ENCODE measurements at regions of chr20 and their contacts with region 1.

Region 1: DNA sequence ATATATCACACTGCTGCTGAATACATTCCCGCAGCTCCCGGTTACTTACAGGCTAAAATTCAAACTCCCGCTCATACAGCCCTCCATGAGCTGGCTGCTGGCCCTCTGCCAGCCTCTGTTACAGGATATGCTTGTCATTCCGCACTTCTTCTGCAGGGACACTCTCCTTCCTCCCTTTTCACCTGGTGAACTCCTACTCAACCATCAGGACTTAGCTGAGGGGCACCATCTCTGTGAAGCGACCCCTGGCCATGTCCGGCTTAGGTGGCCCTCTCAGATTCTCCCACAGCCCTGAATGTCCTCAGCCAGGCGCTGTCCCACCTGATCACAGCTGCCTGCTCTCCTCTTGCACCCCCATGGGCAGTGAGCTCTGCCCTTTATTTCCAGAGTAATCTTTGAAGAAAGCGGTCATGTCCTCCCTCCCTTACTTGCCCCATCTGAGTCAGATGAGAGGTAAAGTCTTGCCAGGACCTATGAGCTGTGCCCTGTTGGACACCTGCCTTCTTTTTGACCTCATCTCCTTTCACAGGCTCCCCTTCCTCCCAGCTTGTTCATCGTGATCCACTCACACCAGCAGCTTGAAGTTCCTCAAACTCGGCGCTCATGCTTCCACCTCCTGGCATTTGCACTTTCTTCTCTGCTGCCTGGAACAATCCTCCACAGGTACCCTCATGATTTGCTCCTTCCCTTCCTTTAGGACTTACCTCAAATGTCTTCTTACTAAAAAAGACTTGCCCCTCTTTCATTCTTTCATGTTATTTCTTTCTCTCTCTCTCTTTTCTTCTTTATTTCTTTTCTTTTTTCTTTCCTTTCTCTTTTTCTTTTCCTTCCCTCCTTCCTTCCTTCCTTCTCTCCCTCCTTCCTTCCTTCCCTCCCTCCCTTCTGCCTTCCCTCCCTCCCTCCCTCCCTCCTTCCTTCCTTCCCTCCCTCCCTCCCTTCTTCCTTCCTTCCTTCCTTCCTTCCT is 5.6 kb downstream of the CYP24A1 start:
- DNase-seq: peak; percentile 99
- ATAC-seq: peak; percentile 77
- H3K4me3 ChIP-seq: peak overlapping the region; percentile 55
- H3K27ac ChIP-seq: peak overlapping the region; percentile 85
- H3K4me1 ChIP-seq: peaks cover 57% of the 10 kb centered on the region
- H3K27me3 ChIP-seq: no peaks in the 10 kb centered on the region
- CTCF ChIP-seq: no peak

Region 2: GRCh38 chr20:54123587-54124180 is 44.5 kb before region 1 on chr20:
- CTCF ChIA-PET with region 1: no interaction called
- POLR2A ChIA-PET with region 1: no interaction called
- intact Hi-C with region 1: loop called (anchors 5 kb)
- DNase-seq: peak; percentile 100
- ATAC-seq: peak; percentile 95
- H3K4me3 ChIP-seq: peak overlapping the region; percentile 17
- H3K27ac ChIP-seq: peak overlapping the region; percentile 89
- H3K4me1 ChIP-seq: peaks cover 48% of the 10 kb centered on the region
- H3K27me3 ChIP-seq: no peaks in the 10 kb centered on the region
- CTCF ChIP-seq: no peak

Region 3: GRCh38 chr20:54573838-54574237 is 405.6 kb after region 1 on chr20:
- CTCF ChIA-PET with region 1: no interaction called
- POLR2A ChIA-PET with region 1: no interaction called
- intact Hi-C with region 1: no loop called
- DNase-seq: no peak
- ATAC-seq: no peak
- H3K4me3 ChIP-seq: no peak overlapping the region
- H3K27ac ChIP-seq: no peak overlapping the region
- H3K4me1 ChIP-seq: no peaks in the 10 kb centered on the region
- H3K27me3 ChIP-seq: peaks cover 49% of the 10 kb centered on the region
- CTCF ChIP-seq: no peak